Activated B cell treated with CpG ODN at 0.5 μM for 24 hours (primary cell): ENCODE measurements at regions of chrX and their contacts with region 1.

Region 1: GRCh38 chrX:40097497-40098263 is at the start of gene BCOR:
- DNase-seq: peak; percentile 59
- ATAC-seq: peak; percentile 16
- H3K4me3 Mint-ChIP-seq: peak within 1 kb of the TSS; percentile 89
- H3K27ac Mint-ChIP-seq: peak within 1 kb of the TSS; percentile 94
- H3K4me1 Mint-ChIP-seq: peaks cover 36% of the 10 kb centered on the region
- H3K27me3 Mint-ChIP-seq: no peaks in the 10 kb centered on the region
- CTCF ChIP-seq: no peak
- total RNA-seq, gene BCOR: 59.3 and 60.4 TPM in 2 replicates

Region 2: DNA sequence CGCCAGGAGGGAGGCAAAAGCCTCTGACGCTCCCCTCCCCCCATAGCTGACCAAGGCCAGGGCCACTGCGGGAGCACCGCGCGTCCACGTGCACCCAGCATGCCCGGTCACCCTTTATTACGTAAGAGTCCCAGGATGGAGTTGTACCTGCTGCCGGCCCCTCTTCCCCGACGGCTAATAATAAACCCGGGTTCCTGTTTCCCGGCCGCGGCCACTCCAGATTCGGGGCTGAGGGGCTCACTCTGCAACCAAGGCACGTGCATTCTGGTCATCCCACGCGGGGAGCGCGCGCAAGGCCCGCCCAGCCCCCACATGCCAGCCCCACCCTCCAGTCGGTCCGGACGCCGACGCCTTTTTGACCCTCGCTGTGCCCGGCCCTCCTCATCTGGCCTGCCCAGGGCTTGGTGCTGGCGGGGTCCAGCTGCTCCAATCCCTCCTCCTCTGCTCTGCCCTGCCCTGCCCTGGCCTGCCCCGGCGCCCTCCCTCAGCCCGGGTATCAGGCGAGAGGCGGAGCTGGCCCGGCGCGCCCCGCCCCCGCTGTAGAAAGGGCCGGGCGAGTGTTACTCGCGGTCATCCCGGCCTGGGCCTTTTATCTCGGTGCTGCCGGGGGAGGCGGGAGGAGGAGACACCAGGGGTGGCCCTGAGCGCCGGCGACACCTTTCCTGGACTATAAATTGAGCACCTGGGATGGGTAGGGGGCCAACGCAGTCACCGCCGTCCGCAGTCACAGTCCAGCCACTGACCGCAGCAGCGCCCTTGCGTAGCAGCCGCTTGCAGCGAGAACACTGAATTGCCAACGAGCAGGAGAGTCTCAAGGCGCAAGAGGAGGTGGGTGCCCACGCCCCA is 1293.9 kb before region 1 on chrX:
- CTCF ChIA-PET with region 1: no interaction called
- POLR2A ChIA-PET with region 1: no interaction called
- intact Hi-C with region 1: loop called (anchors 10 kb)
- DNase-seq: peak; percentile 55
- ATAC-seq: peak; percentile 63
- H3K4me3 Mint-ChIP-seq: peak overlapping the region; percentile 89
- H3K27ac Mint-ChIP-seq: peak overlapping the region; percentile 80
- H3K4me1 Mint-ChIP-seq: peaks cover 39% of the 10 kb centered on the region
- H3K27me3 Mint-ChIP-seq: no peaks in the 10 kb centered on the region
- CTCF ChIP-seq: no peak

Region 3: DNA sequence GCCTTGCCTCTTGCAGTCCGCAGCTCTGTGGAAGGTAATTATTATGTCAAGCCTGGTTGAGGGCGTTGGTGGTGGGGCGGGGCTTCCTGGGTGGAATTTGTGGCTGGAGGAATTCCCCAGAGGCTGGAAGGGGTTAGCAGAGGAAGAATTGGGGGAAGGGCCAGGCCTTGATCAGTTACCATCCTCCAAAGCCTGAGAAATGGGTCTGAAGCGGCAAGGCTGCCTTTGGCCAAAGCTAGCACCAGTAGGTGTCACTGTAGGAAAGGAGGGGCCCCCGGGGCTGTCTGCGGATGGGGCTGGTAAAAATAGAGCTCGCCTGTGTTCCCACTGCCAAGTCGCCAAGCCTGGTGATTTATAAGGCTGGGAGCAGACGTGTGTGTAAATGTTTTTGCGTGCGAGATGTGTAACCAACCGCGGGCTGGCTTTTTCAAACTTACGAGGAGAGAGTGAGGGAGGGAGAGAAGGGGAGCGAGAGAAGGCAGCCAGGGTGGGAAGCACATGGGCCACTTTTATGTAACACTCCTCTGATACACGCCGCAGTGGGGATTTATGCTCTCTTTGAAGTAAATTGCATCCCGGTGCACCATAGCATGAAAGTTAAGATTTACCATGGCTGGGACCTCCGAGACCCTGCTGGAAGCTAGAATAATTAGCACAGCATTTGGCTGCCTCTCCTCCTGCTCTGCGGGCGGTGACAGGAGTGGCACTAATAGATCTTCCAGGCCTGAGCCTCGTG is 366.9 kb before region 1 on chrX:
- CTCF ChIA-PET with region 1: no interaction called
- POLR2A ChIA-PET with region 1: interaction called, 7 read pairs
- intact Hi-C with region 1: loop called (anchors 5 kb)
- DNase-seq: no peak
- ATAC-seq: peak; percentile 64
- H3K4me3 Mint-ChIP-seq: peak overlapping the region; percentile 53
- H3K27ac Mint-ChIP-seq: no peak overlapping the region
- H3K4me1 Mint-ChIP-seq: peaks cover 5% of the 10 kb centered on the region
- H3K27me3 Mint-ChIP-seq: peaks cover 8% of the 10 kb centered on the region
- CTCF ChIP-seq: no peak

Region 4: DNA sequence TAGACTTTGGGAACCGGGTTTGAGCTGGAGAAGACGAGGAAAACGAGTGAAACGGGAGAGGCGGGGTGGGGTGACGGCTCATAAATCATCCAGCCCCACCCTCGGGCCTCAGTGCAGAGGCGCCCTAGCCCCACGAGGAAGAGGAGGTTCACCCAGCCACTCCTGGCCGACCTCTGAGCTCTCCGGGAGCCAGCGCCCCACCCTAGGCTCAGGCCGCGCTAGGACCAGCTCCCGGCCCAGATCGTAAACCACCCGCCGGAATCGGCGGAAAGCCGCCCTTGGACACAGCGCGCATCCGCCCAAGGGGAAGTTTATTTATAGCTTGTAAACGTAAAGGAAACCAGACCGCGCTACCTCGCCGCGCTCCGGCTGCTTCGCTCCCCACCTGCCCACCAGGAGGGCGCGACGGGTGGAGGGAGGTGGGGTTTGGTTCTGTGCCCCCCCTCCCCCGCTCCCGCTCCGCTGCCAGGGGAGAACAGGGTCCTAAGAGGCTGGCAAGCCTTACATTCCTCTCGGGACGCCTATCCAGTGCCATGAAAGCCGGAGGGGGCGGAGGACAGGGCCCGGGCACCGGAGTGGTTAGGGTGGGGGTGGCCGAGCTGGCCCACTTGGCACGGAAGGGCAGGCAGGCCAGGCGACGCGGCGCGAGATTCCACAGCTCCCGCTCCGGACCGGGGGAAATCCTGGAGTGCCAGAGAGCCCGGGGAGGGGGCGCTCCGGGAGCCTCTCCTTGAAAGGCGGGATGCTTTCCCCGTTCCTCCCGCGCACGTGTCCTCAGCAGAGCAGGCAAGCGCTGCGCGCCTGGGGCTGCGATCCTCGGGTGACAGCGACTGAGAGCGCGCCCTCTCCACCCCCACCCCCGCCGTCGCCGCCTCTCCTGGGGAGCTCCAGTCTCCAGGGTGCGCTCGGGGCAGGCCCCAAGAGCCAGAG is 84.1 kb before region 1 on chrX:
- CTCF ChIA-PET with region 1: interaction called, 4 read pairs
- POLR2A ChIA-PET with region 1: interaction called, 42 read pairs
- intact Hi-C with region 1: loop called (anchors 1 kb)
- DNase-seq: peak; percentile 41
- ATAC-seq: peak; percentile 47
- H3K4me3 Mint-ChIP-seq: peak overlapping the region; percentile 76
- H3K27ac Mint-ChIP-seq: peak overlapping the region; percentile 56
- H3K4me1 Mint-ChIP-seq: peaks cover 26% of the 10 kb centered on the region
- H3K27me3 Mint-ChIP-seq: no peaks in the 10 kb centered on the region
- CTCF ChIP-seq: no peak

Region 5: GRCh38 chrX:40108959-40109287 is 11.2 kb after region 1 on chrX:
- CTCF ChIA-PET with region 1: interaction called, 3 read pairs
- POLR2A ChIA-PET with region 1: interaction called, 80 read pairs
- intact Hi-C with region 1: loop called (anchors 1 kb)
- DNase-seq: peak; percentile 44
- ATAC-seq: peak; percentile 29
- H3K4me3 Mint-ChIP-seq: peak overlapping the region; percentile 64
- H3K27ac Mint-ChIP-seq: no peak overlapping the region
- H3K4me1 Mint-ChIP-seq: peaks cover 18% of the 10 kb centered on the region
- H3K27me3 Mint-ChIP-seq: no peaks in the 10 kb centered on the region
- CTCF ChIP-seq: no peak

Region 6: GRCh38 chrX:40169193-40170101 is 71.8 kb after region 1 on chrX:
- CTCF ChIA-PET with region 1: interaction called, 4 read pairs
- POLR2A ChIA-PET with region 1: interaction called, 268 read pairs
- intact Hi-C with region 1: loop called (anchors 1 kb)
- DNase-seq: peak; percentile 63
- ATAC-seq: peak; percentile 59
- H3K4me3 Mint-ChIP-seq: peak overlapping the region; percentile 88
- H3K27ac Mint-ChIP-seq: peak overlapping the region; percentile 98
- H3K4me1 Mint-ChIP-seq: peaks cover 69% of the 10 kb centered on the region
- H3K27me3 Mint-ChIP-seq: no peaks in the 10 kb centered on the region
- CTCF ChIP-seq: no peak

Region 7: DNA sequence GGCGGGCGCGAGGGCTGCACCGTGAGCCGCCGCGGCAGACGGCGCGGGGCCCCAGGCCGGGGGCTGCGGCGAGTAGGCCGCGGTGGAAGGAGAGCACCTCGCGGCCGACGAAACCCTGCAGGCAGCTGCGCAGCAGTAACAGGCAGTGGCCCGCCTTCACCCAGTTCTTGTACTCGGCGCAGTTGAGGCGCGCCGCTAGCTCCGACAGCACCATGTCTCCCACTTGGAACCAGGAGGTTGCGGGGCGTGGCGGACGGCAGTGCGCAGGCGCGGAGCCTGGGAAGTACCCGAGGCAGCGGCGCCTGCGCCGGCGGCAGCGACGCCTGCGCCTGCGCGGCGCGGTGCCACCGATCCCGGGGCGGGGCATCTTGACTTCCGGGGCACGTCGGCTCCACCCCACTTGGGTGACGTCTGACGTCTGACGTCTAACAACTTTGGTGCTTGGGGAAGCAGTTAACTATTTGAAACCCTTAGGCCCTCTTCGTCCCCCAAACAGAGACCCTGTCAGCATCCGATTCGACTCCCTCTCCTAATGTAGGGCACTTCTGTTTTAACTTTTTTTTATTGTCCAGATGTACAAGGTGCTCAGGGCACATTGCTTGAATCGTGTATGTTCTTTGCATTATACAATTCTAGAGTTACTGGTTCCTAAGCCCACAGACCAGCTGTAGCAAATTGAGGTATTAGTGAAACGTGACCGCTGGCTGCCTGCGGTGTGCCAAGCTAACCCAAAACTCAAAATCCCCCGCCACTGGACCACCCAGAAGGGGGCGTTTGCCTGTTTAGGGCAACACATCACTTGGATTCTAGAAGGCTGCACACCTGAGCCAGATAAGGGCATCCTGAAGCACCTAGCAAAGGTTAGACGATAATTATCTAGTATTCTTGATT is 549.9 kb after region 1 on chrX and contains the start of gene CXorf38:
- CTCF ChIA-PET with region 1: no interaction called
- POLR2A ChIA-PET with region 1: no interaction called
- intact Hi-C with region 1: loop called (anchors 5 kb)
- DNase-seq: peak; percentile 83
- ATAC-seq: peak; percentile 67
- H3K4me3 Mint-ChIP-seq: peak within 1 kb of the TSS; percentile 94
- H3K27ac Mint-ChIP-seq: peak within 1 kb of the TSS; percentile 93
- H3K4me1 Mint-ChIP-seq: peaks cover 39% of the 10 kb centered on the region
- H3K27me3 Mint-ChIP-seq: no peaks in the 10 kb centered on the region
- CTCF ChIP-seq: no peak
- total RNA-seq, gene CXorf38: 20.9 and 21.9 TPM in 2 replicates